Sigmoid colon (tissue), 7 donors: ENCODE measurements at regions of chr6 and their contacts with region 1.

Region 1: GRCh38 chr6:111873178-111874024 is at the start of gene FYN:
- DNase-seq: peak; percentile 99
- H3K4me3 ChIP-seq: peak within 1 kb of the TSS; percentile 67 to 97 (median 84)
- H3K27ac ChIP-seq: peak within 1 kb of the TSS; percentile 78 to 91 (median 84)
- H3K4me1 ChIP-seq: peaks cover 0 to 29% (median 13%) of the 10 kb centered on the region in 4 donors
- H3K27me3 ChIP-seq: no peaks in the 10 kb centered on the region
- CTCF ChIP-seq: peak in 3 of 4 experiments; percentile 17 to 55 (median 40)
- EP300 ChIP-seq: no peak
- POLR2A ChIP-seq: peak; percentile 33 to 53
- total RNA-seq, gene FYN: 56.9 to 81.4 (median 67.9) TPM

Region 2: GRCh38 chr6:111709615-111710398 is 163.6 kb before region 1 on chr6:
- intact Hi-C with region 1: loop called (anchors 2 kb)
- DNase-seq: peak; percentile 88
- H3K4me3 ChIP-seq: no peak overlapping the region
- H3K27ac ChIP-seq: peak overlapping the region in 3 of 4 donors; percentile 52 to 58 (median 56)
- H3K4me1 ChIP-seq: peaks cover 0 to 43% (median 38%) of the 10 kb centered on the region in 4 donors
- H3K27me3 ChIP-seq: no peaks in the 10 kb centered on the region
- CTCF ChIP-seq: peak; percentile 62 to 91 (median 68)
- EP300 ChIP-seq: no peak
- POLR2A ChIP-seq: no peak

Region 3: GRCh38 chr6:111764238-111765175 is 108.9 kb before region 1 on chr6:
- intact Hi-C with region 1: loop called (anchors 5 kb)
- DNase-seq: no peak
- H3K4me3 ChIP-seq: no peak overlapping the region
- H3K27ac ChIP-seq: peak overlapping the region in 3 of 4 donors; percentile 10 to 23 (median 14)
- H3K4me1 ChIP-seq: peaks cover 0 to 52% (median 39%) of the 10 kb centered on the region in 4 donors
- H3K27me3 ChIP-seq: no peaks in the 10 kb centered on the region
- CTCF ChIP-seq: no peak
- EP300 ChIP-seq: no peak
- POLR2A ChIP-seq: no peak

Region 4: GRCh38 chr6:111804627-111805235 is 68.7 kb before region 1 on chr6:
- intact Hi-C with region 1: loop called (anchors 5 kb)
- DNase-seq: no peak
- H3K4me3 ChIP-seq: no peak overlapping the region
- H3K27ac ChIP-seq: peak overlapping the region in 3 of 4 donors; percentile 47 to 50 (median 50)
- H3K4me1 ChIP-seq: peaks cover 0 to 33% (median 21%) of the 10 kb centered on the region in 4 donors
- H3K27me3 ChIP-seq: no peaks in the 10 kb centered on the region
- CTCF ChIP-seq: no peak
- EP300 ChIP-seq: no peak
- POLR2A ChIP-seq: no peak

Region 5: GRCh38 chr6:111997078-111997852 is 123.9 kb after region 1 on chr6:
- intact Hi-C with region 1: loop called (anchors 1 kb)
- DNase-seq: peak; percentile 93
- H3K4me3 ChIP-seq: peak overlapping the region in 1 of 4 donors; percentile 1
- H3K27ac ChIP-seq: peak overlapping the region in 3 of 4 donors; percentile 19 to 55 (median 35)
- H3K4me1 ChIP-seq: peaks cover 0 to 10% (median 0%) of the 10 kb centered on the region in 4 donors
- H3K27me3 ChIP-seq: no peaks in the 10 kb centered on the region
- CTCF ChIP-seq: peak; percentile 83 to 94 (median 86)
- EP300 ChIP-seq: no peak
- POLR2A ChIP-seq: no peak

Region 6: GRCh38 chr6:112043032-112044007 is 169.9 kb after region 1 on chr6:
- intact Hi-C with region 1: loop called (anchors 5 kb)
- DNase-seq: peak; percentile 92
- H3K4me3 ChIP-seq: peak overlapping the region; percentile 32 to 61 (median 56)
- H3K27ac ChIP-seq: peak overlapping the region; percentile 77 to 84 (median 80)
- H3K4me1 ChIP-seq: peaks cover 0 to 35% (median 25%) of the 10 kb centered on the region in 4 donors
- H3K27me3 ChIP-seq: no peaks in the 10 kb centered on the region
- CTCF ChIP-seq: peak; percentile 86 to 94 (median 94)
- EP300 ChIP-seq: no peak
- POLR2A ChIP-seq: no peak